ENCODE measurements at regions of chr4 and their contacts with region 1.

Region 1: GRCh38 chr4:129641179-129641578 is 545.2 kb downstream of the C4orf33 start:
- DNase-seq: peak in 4 of 5 donors; percentile 19 to 57 (median 34)
- H3K4me3 ChIP-seq: no peak overlapping the region
- H3K27ac ChIP-seq: no peak overlapping the region
- H3K4me1 ChIP-seq: no peaks in the 10 kb centered on the region
- H3K27me3 ChIP-seq: no peaks in the 10 kb centered on the region
- CTCF ChIP-seq: peak; percentile 79

Region 2: GRCh38 chr4:129362674-129363274 is 278.4 kb before region 1 on chr4:
- intact Hi-C with region 1: loop called (anchors 10 kb)
- DNase-seq: peak in 4 of 5 donors; percentile 55 to 93 (median 76)
- H3K4me3 ChIP-seq: no peak overlapping the region
- H3K27ac ChIP-seq: no peak overlapping the region
- H3K4me1 ChIP-seq: no peaks in the 10 kb centered on the region
- H3K27me3 ChIP-seq: no peaks in the 10 kb centered on the region
- CTCF ChIP-seq: peak; percentile 71

Region 3: GRCh38 chr4:129515356-129515755 is 125.8 kb before region 1 on chr4:
- intact Hi-C with region 1: no loop called
- DNase-seq: no peak
- H3K4me3 ChIP-seq: no peak overlapping the region
- H3K27ac ChIP-seq: no peak overlapping the region
- H3K4me1 ChIP-seq: no peaks in the 10 kb centered on the region
- H3K27me3 ChIP-seq: no peaks in the 10 kb centered on the region
- CTCF ChIP-seq: no peak

Measured in kidney (tissue), 22 donors.